ENCODE measurements at regions of chr5 and their contacts with region 1.

Region 1: GRCh38 chr5:135887351-135887864 is 8.2 kb downstream of the IL9 start:
- DNase-seq: peak; percentile 5
- H3K4me3 ChIP-seq: no peak overlapping the region
- CTCF ChIP-seq: peak; percentile 77

Region 2: DNA sequence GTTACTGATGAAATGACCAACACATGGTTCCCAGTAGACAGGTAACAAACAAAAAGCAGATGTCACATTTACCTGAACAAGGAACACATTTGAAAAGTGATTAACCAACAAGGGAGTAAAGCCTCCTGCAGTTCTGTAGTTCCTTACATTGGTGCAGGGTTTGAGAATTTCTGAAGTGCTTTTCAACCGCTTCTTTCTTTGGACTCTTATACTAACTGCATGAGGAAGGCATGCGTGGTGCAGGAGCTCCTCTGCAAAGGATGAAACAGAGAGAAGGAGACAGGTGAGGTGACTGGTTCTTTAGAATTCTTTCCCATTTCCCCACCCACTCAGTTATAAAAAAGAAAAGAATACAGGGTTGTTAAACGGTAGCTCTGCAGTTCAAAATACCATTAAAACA is 12.9 kb after region 1 on chr5:
- CTCF ChIA-PET with region 1: interaction called, 12 read pairs
- POLR2A ChIA-PET with region 1: no interaction called
- DNase-seq: no peak
- H3K4me3 ChIP-seq: no peak overlapping the region
- CTCF ChIP-seq: no peak

Region 3: DNA sequence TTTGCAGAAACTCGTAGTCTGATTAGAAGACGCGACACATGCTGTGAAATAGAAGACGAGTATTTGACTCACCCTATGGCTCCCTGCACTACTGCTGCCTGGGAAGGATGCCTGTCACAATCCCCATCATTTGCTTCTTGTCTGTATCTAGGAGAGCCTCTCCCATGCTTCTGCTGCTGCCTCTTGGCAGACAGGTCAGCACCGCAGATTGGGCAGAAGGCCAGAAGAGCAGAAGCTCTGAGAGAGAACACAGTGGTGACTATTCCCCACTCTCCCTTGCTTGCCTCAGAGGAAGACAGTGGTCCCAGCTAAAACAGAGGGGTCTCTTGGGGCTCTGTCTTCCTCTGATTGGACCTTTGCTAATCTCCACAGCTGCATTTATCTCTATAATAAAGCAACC is 389.5 kb after region 1 on chr5:
- CTCF ChIA-PET with region 1: no interaction called
- POLR2A ChIA-PET with region 1: no interaction called
- DNase-seq: no peak
- H3K4me3 ChIP-seq: no peak overlapping the region
- CTCF ChIP-seq: no peak

Region 4: GRCh38 chr5:136909906-136910305 is 1022.5 kb after region 1 on chr5:
- CTCF ChIA-PET with region 1: no interaction called
- POLR2A ChIA-PET with region 1: no interaction called
- DNase-seq: no peak
- H3K4me3 ChIP-seq: no peak overlapping the region
- CTCF ChIP-seq: no peak

Measured in AG04449 (cell line).